Esophagus muscularis mucosa (tissue), 4 donors: ENCODE measurements at regions of chr2 and their contacts with region 1.

Region 1: DNA sequence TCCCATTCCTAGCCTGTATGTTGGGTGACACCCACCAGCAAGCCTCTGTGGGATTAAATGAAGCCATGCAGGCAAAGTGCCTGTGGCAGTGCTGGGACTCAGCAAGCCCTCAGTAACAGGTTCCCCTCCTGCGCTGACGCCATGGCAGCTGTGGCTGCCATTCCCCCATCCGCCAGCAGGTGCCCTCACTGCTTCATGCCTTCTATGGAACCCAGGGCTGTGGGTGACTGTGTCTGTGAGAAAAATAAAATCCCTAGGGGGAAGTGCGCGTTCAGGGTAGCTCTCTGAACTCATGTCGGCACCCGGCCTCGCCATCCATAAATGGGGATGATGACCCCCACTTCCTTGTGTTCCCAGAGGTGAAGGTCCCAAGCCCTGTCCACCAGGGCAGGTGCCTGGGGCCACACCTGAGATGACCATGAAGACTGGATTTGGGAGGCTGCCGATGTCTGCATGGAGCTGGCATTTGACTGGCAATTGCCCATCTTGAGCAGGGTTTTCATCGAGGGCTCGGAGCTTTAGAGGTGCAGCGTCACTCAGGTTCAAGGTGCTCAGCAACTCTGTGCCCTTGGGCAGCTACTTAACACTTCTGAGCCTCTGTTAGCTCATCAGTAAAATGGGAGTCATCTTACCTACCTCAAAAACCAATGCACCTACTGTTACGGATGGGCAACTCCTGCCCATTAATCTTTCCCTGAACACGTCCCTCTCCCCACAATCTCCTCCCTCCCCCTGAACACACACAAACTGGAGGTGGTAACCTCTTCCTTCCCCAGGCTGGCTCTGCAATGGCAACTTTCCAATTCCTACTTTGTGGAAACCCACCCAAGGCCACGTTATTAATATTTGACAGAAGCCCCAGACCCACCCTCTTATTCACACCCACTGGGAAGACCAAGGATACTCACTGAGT is 2.9 kb upstream of the MAL start:
- DNase-seq: no peak
- H3K4me3 ChIP-seq: no peak overlapping the region
- H3K27ac ChIP-seq: no peak overlapping the region
- H3K4me1 ChIP-seq: peaks cover 13 to 46% (median 23%) of the 10 kb centered on the region in 4 donors
- H3K27me3 ChIP-seq: peaks cover 0 to 64% (median 32%) of the 10 kb centered on the region in 4 donors
- CTCF ChIP-seq: peak; percentile 85 to 94 (median 90)
- EP300 ChIP-seq: no peak
- POLR2A ChIP-seq: no peak

Region 2: DNA sequence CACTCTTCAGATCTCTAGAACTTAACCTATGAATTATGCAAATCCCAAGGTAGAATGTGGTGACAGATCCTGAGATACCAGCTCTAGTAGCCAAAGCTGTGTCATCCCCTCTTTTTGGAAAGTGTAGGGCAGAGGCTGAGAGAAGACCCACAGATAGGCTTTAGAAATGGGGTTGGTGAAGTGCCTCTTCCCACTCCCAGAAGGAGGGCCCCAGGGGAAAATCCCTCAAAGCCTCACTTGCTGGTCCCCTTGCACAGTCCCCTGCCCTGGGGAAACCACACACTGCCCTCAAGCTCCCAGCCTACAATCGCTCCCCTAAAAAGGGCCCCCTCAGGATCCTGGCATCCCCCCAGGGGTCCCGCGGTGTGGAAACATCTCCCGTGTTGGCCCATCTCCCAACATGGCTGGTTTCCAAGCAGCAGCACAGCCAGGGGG is 27.9 kb after region 1 on chr2:
- intact Hi-C with region 1: loop called (anchors 2 kb)
- DNase-seq: no peak
- H3K4me3 ChIP-seq: no peak overlapping the region
- H3K27ac ChIP-seq: no peak overlapping the region
- H3K4me1 ChIP-seq: peaks cover 0 to 4% (median 0%) of the 10 kb centered on the region in 4 donors
- H3K27me3 ChIP-seq: peaks cover 0 to 32% (median 3%) of the 10 kb centered on the region in 4 donors
- CTCF ChIP-seq: no peak
- EP300 ChIP-seq: no peak
- POLR2A ChIP-seq: no peak

Region 3: DNA sequence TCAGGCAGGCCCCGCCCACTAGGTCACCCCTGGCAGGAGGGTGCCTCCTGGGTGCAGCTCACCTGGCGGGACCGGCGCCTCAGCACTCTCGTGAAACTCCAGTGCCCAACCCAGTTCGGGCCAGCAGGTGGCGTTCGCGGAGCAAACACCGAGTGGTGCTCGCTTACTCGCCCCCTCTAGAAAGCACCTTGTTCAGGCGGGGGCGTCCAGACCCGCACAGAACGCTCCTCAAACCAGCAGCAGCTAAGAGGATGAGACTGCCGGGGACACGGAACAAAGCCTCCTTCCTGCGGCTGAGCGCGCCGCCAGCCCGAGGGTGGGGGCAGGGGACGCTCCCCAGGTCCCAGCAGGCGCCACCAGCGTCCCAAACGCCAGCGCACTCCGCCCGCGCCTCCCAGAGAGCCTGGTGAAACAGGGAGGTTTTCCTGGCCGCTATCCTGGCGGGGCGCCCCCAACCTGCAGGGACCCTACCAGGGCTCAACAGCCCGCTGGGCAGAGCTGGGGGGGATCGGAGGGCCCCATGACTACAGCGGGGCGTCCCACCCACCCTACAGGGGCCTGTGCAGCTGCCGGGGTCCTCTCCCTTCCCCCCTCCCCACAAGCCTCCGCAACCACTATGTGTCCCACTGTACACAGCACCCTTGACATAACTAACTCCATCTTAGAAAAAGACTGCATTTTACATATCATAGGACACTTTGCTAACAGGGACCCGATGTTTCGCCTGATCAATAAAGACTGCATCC is 54.4 kb after region 1 on chr2:
- intact Hi-C with region 1: loop called (anchors 5 kb)
- DNase-seq: peak; percentile 93
- H3K4me3 ChIP-seq: peak overlapping the region; percentile 41 to 55 (median 50)
- H3K27ac ChIP-seq: no peak overlapping the region
- H3K4me1 ChIP-seq: peaks cover 9 to 14% (median 11%) of the 10 kb centered on the region in 4 donors
- H3K27me3 ChIP-seq: peaks cover 0 to 74% (median 8%) of the 10 kb centered on the region in 4 donors
- CTCF ChIP-seq: peak; percentile 51 to 82 (median 69)
- EP300 ChIP-seq: no peak
- POLR2A ChIP-seq: no peak

Region 4: DNA sequence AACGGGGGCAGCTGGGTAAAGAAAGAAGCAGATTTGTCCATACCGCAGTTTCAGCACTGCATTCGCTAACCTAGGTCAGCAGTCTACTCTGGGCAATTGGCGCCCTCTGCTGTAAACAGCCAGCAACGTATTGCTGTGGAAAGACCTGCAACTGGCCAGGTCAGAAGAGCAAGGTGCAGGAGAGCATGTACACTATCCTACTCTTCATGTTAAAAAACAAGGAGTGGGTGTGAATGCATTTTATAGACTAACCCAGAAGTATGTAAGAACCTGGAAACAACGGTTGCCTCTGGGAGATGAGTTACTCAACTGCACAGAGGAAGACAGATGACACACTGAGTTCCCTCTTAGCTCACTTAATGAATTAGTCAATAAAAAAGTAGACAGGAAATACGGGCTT is 92.9 kb after region 1 on chr2:
- intact Hi-C with region 1: loop called (anchors 2 kb)
- DNase-seq: no peak
- H3K4me3 ChIP-seq: no peak overlapping the region
- H3K27ac ChIP-seq: no peak overlapping the region
- H3K4me1 ChIP-seq: peaks cover 17 to 39% (median 34%) of the 10 kb centered on the region in 4 donors
- H3K27me3 ChIP-seq: no peaks in the 10 kb centered on the region
- CTCF ChIP-seq: peak; percentile 65 to 83 (median 68)
- EP300 ChIP-seq: no peak
- POLR2A ChIP-seq: no peak